ENCODE measurements at regions of chr15 and their contacts with region 1.

Region 1: GRCh38 chr15:81265944-81266775 is 57.8 kb downstream of the STARD5 start:
- DNase-seq: peak; percentile 90
- ATAC-seq: peak; percentile 93
- H3K4me3 Mint-ChIP-seq: peak overlapping the region; percentile 58
- H3K27ac Mint-ChIP-seq: no peak overlapping the region
- H3K4me1 Mint-ChIP-seq: peaks cover 13% of the 10 kb centered on the region
- H3K27me3 Mint-ChIP-seq: no peaks in the 10 kb centered on the region
- CTCF ChIP-seq: peak; percentile 78

Region 2: DNA sequence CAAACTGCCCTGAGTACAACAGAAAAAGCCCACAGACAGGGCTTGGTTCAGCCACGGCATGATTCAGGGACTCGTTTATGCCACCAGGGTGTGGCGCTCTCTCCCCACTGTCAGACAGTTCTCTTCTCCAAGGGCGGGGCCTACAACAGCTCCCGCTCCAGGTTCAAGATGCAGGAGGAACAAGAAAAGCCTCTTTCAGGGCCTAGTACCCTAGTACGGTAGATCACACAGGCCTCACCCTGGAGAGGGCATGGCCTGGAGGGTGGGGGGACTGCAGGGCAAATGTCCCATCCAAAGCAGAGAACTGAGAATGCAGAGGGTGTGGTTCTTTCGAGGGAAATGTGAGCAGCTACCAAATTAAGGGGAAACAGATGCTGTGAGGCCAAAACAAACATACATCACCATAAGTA is 288.5 kb before region 1 on chr15:
- CTCF ChIA-PET with region 1: interaction called, 82 read pairs
- POLR2A ChIA-PET with region 1: no interaction called
- DNase-seq: peak; percentile 78
- ATAC-seq: peak; percentile 93
- H3K4me3 Mint-ChIP-seq: no peak overlapping the region
- H3K27ac Mint-ChIP-seq: peak overlapping the region; percentile 69; the same call in 1 of the 2 replicates
- H3K4me1 Mint-ChIP-seq: peaks cover 31% of the 10 kb centered on the region
- H3K27me3 Mint-ChIP-seq: no peaks in the 10 kb centered on the region
- CTCF ChIP-seq: peak; percentile 53

Region 3: GRCh38 chr15:81117136-81117535 is 149.0 kb before region 1 on chr15:
- CTCF ChIA-PET with region 1: interaction called, 238 read pairs
- POLR2A ChIA-PET with region 1: no interaction called
- DNase-seq: no peak
- ATAC-seq: no peak
- H3K4me3 Mint-ChIP-seq: no peak overlapping the region
- H3K27ac Mint-ChIP-seq: no peak overlapping the region
- H3K4me1 Mint-ChIP-seq: peaks cover 15% of the 10 kb centered on the region
- H3K27me3 Mint-ChIP-seq: peaks cover 22% of the 10 kb centered on the region
- CTCF ChIP-seq: no peak

Region 4: DNA sequence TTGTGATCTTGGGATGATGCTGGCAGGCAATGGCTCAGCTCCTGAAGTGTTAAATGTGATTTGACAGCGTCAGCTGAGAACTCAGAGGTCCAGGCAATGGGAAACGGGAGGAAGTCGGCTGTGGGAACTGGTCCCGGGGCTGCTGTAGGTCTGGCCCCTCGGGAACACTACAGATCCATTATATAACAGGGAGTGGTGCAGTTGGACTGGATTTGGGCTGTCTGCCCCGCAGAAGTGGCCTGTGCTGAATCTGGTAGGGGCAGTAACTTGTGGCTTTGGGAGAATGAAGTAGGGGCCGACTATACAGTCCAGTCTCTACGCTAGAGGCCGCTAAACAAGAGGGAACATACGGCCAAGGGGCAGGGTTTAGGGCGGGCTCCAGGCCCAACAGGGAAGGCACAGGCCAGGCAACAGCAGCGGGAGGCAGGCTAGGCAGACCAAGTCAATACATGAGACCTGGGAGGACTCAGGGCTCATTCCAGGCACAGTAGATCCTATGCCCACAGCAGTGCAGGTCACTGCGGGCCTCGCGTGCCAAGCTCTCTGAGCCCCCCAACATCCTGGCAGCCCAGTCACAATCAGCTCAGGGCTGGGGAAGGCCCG is 89.8 kb before region 1 on chr15:
- CTCF ChIA-PET with region 1: interaction called, 61 read pairs
- POLR2A ChIA-PET with region 1: no interaction called
- DNase-seq: peak; percentile 21
- ATAC-seq: peak; percentile 83
- H3K4me3 Mint-ChIP-seq: no peak overlapping the region
- H3K27ac Mint-ChIP-seq: no peak overlapping the region
- H3K4me1 Mint-ChIP-seq: no peaks in the 10 kb centered on the region
- H3K27me3 Mint-ChIP-seq: no peaks in the 10 kb centered on the region
- CTCF ChIP-seq: no peak

Region 5: DNA sequence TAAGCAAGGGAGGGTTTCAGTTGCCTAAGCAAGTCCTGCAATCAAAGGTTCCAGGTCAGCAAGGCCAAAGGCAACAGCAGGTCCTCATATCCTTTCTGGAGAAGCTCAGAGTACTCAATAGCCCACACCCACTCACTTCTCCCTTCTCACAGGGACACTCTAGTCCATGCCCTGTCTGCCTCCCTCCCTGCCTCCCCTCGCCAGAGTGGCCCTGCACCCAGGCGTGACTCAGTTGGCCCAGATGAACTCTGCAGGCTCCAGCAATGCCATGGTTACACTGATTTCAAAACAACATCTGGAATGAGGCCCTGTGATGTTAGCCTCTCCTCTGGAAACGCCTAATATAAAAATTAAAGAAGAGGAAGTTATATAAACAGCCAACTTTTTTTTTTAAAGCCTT is 36.6 kb before region 1 on chr15:
- CTCF ChIA-PET with region 1: interaction called, 14 read pairs
- POLR2A ChIA-PET with region 1: no interaction called
- DNase-seq: no peak
- ATAC-seq: no peak
- H3K4me3 Mint-ChIP-seq: no peak overlapping the region
- H3K27ac Mint-ChIP-seq: no peak overlapping the region
- H3K4me1 Mint-ChIP-seq: peaks cover 18% of the 10 kb centered on the region
- H3K27me3 Mint-ChIP-seq: no peaks in the 10 kb centered on the region; the same call in 1 of the 2 replicates
- CTCF ChIP-seq: no peak

Region 6: DNA sequence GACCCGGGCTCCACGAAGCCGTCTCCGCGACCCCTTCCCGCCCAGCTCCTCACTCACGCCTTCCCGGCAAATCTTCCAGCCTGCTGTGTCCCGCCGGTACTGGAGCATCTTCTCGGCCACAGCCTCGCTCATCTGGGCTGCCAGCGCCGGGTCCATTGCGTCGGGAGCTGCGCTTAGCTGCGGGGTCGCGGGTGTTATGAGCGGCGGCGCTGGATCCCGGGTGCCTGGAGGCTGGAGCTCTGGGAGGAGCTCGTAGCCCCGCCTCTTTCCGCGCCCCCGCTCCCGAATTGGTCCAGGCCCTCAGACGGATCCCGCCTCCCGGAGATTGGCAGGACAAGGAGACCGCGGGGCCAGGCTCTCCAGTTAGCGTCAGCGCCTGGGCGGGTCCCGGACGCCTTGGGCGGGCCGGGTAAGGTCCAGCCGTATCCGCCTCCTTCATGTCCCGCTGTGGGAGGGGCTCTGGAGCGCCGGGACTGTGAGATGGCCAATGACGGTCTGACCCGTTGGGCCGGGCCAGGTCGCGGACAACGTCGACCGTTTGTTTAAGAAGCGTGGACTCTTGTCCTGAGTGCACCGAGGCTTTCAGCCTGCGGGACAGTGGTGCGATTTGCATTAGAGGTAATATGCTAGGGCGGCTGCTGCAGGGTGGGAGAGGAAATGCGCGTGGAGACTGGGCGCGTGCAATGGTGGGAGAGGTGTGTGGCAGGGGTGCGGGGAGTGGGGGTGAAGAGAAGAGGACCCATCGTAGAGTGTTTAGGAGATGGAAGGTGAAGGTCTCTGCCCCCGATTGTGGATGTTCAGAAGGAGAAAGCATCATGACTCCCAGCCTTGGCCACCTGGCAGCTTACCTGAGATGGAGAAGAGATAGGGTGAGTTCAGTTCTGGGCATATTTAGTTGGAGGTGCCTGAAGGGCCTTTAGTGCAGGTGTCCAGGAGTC is 58.1 kb after region 1 on chr15 and contains the start of gene STARD5:
- CTCF ChIA-PET with region 1: interaction called, 20 read pairs
- POLR2A ChIA-PET with region 1: interaction called, 3 read pairs
- DNase-seq: peak; percentile 100
- ATAC-seq: peak; percentile 100
- H3K4me3 Mint-ChIP-seq: peak within 1 kb of the TSS; percentile 100
- H3K27ac Mint-ChIP-seq: peak within 1 kb of the TSS; percentile 98
- H3K4me1 Mint-ChIP-seq: peaks cover 11% of the 10 kb centered on the region
- H3K27me3 Mint-ChIP-seq: peaks cover 12% of the 10 kb centered on the region
- CTCF ChIP-seq: no peak
- total RNA-seq, gene STARD5: 6.3 to 7.2 TPM (median 6.8 TPM) in 3 replicates

Region 7: DNA sequence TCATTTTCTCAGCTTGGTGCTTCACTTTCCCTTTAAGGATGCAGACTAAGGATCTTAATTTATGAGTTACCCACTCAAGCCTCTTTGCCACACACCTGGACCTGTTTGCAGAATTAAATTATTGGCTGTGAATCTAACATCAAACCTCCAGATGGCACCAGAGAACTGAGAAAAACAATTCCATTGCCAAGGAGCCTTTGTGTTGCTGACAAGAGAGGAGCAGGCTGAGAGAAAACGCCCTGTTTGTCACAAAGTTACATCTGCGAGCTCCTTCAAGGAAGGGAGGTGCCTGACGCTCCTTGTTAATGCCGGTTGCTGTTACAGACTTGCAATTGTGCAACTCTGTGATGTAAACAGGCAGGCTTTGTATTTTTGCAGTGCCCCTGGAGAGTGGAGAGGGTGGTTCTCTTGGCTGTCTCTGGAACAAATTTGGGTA is 144.2 kb after region 1 on chr15:
- CTCF ChIA-PET with region 1: interaction called, 20 read pairs
- POLR2A ChIA-PET with region 1: no interaction called
- DNase-seq: peak; percentile 24
- ATAC-seq: peak; percentile 86
- H3K4me3 Mint-ChIP-seq: peak overlapping the region; percentile 14; the same call in 1 of the 2 replicates
- H3K27ac Mint-ChIP-seq: peak overlapping the region; percentile 20; the same call in 1 of the 2 replicates
- H3K4me1 Mint-ChIP-seq: peaks cover 8% of the 10 kb centered on the region
- H3K27me3 Mint-ChIP-seq: no peaks in the 10 kb centered on the region; the same call in 1 of the 2 replicates
- CTCF ChIP-seq: no peak

Region 8: GRCh38 chr15:81604713-81605112 is 338.6 kb after region 1 on chr15:
- CTCF ChIA-PET with region 1: no interaction called
- POLR2A ChIA-PET with region 1: no interaction called
- DNase-seq: no peak
- ATAC-seq: no peak
- H3K4me3 Mint-ChIP-seq: no peak overlapping the region
- H3K27ac Mint-ChIP-seq: no peak overlapping the region
- H3K4me1 Mint-ChIP-seq: peaks cover 16% of the 10 kb centered on the region
- H3K27me3 Mint-ChIP-seq: peaks cover 3% of the 10 kb centered on the region; the same call in 1 of the 2 replicates
- CTCF ChIP-seq: no peak

Measured in WTC11 (cell line).